Activated CD4-positive, alpha-beta T cell treated with anti-CD3 and anti-CD28 coated beads, Interleukin-2, amount 10 ng/mL, durations not matched to agents 24 days and 14 days (primary cell): ENCODE measurements at regions of chr3 and their contacts with region 1.

Region 1: GRCh38 chr3:42012935-42013690 is 51.2 kb upstream of the ULK4 start:
- DNase-seq: peak; percentile 91
- H3K4me3 Mint-ChIP-seq: peak overlapping the region; percentile 84
- H3K27ac Mint-ChIP-seq: peak overlapping the region; percentile 93
- H3K4me1 Mint-ChIP-seq: peaks cover 38% of the 10 kb centered on the region
- H3K27me3 Mint-ChIP-seq: no peaks in the 10 kb centered on the region

Region 2: DNA sequence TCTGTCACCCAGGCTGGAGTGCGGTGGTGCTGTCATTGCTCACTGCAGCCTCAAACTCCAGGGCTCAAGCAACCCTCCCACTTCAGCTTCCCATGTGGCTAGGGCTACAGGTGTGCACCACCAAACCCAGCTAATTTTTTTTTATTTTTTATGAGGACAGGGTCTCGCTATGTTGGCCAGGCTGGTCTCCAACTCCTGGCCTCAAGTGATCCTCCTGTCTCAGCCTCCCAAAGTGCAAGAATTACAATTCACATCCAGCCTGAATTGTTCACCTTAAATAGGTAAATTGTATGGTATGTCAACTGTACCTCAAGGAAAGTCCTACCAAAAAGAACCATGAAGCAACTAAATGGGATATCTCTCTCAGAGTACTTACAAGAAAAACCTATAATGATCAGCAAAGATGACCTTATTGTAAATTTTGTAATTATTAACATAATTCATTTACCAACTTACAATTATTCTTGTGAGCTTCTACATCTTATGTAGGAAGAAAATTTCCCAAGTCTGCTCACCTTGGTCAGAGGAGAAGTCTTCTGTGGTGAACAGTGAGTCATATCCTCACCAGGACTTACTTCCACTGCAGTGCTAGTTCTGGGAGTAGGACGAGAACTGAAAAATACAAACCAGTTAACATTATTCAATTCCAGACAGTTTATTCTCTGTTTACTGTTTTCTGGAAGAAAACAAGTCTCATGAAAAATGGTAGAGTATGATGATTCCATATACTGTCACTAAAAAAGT is 105.6 kb before region 1 on chr3:
- intact Hi-C with region 1: no loop called
- DNase-seq: peak; percentile 13
- H3K4me3 Mint-ChIP-seq: no peak overlapping the region
- H3K27ac Mint-ChIP-seq: no peak overlapping the region
- H3K4me1 Mint-ChIP-seq: peaks cover 2% of the 10 kb centered on the region
- H3K27me3 Mint-ChIP-seq: no peaks in the 10 kb centered on the region

Region 3: DNA sequence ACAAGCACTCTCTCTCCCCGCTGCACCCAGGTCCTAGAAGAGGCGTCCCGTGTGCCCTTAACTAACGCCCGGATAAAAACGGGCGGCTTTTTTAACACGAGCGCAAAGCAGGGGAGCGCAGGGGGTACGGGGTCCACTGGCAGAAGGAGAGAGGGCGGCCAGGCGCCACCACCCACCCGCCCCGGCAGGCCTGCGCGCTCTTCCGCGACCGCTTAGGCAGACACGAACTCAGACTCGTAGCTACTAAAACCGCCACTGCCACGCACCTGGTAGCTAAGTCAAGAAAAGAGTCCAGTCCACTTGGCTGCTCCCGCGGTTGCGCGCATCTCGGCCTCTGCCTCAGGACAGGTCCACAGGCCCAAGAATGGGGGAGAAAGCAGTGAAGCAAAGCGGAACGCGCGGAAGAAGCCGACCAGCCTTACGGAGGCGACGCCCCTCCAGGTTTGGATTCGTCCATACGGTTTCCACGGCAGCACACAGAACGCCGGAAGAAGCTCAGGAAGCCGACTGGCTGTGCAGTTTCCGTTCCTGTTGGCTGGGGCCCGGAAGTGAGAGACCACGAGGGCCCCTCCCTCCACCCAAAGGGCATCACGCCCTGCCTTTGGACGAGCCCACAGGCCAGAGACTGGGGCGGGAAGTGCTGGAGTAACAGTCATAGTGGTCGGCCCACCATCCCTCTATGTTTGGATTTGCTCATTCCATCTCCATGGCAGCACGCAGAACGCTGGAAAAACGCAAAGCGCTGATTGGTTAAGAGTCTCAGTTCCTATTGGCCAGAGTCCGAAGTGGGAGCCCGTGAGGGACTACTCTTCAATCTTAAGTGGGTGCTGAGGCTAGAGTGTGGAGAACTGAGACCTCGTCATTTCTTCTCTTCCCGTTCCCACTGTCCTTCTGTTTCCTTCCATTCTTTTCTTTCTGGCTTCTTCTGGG is 51.1 kb before region 1 on chr3 and contains the start of gene ULK4:
- intact Hi-C with region 1: loop called (anchors 1 kb)
- DNase-seq: peak; percentile 98
- H3K4me3 Mint-ChIP-seq: peak within 1 kb of the TSS; percentile 92
- H3K27ac Mint-ChIP-seq: peak within 1 kb of the TSS; percentile 94
- H3K4me1 Mint-ChIP-seq: peaks cover 9% of the 10 kb centered on the region
- H3K27me3 Mint-ChIP-seq: peaks cover 1% of the 10 kb centered on the region
- total RNA-seq, gene ULK4: 6.3 and 10.2 TPM in 2 replicates

Region 4: DNA sequence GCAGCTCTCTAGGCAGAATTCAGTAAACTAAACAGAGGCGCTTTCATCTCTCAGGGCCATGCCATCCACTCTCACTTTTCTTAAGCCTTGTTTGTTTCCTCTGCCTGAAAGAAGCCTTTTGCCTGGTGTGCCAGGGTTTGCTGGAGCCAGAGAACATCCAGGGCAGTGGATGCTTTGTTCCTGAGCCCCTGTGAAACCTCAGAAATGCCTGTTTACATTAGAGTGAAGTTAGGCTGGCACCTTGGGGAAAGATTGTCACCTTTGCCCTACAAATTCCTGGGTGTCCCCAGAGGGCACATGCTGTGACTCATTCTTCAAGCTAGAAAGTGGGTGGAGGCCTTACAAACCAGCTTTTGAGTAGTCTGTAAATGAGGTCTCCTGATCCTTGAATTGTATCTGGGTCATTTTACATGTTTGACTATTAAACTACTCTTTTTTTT is 67.4 kb after region 1 on chr3:
- intact Hi-C with region 1: loop called (anchors 1 kb)
- DNase-seq: no peak
- H3K4me3 Mint-ChIP-seq: peak overlapping the region; percentile 26
- H3K27ac Mint-ChIP-seq: peak overlapping the region; percentile 84
- H3K4me1 Mint-ChIP-seq: peaks cover 37% of the 10 kb centered on the region
- H3K27me3 Mint-ChIP-seq: no peaks in the 10 kb centered on the region

Region 5: DNA sequence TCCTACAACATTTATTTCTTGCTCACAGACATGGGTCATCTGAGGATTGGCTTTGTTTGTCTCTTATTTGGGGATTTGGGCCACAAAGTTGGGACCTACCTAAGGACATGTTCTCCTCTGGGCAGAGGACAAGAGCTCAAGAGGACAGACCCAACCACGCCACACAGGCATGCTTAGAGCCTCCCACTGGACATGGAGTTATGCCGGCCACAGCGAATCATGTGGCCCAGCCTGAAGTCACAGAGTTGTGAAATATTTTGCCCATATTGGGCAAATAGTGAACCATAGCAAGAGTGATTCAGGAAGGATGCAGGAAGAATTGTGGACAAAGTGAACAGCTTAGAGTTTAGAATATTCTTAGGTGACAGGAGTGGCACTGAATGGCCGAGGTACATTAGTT is 87.9 kb after region 1 on chr3:
- intact Hi-C with region 1: loop called (anchors 1 kb)
- DNase-seq: no peak
- H3K4me3 Mint-ChIP-seq: no peak overlapping the region
- H3K27ac Mint-ChIP-seq: no peak overlapping the region
- H3K4me1 Mint-ChIP-seq: peaks cover 30% of the 10 kb centered on the region
- H3K27me3 Mint-ChIP-seq: no peaks in the 10 kb centered on the region